ENCODE measurements at regions of chr10 and their contacts with region 1.

Region 1: DNA sequence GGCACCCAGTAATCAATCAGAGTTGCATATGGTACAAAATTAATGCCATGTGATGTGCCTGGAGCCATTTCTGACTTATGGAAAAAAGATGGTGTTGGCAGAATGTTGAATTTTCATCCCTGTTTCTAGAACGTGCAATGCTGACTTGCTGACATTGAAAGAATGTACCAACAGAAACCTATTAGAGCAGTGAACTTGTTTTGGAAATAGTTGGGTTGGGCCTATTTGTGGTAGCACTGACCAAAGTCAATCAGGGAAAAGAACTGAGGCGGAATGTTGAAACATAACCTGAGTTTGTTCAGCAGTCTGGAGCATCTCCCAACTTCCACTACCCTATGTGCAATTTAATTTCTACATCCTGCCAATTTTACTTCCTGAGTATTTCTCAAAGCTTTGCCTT is 11.7 kb upstream of the KIAA1217 start:
- DNase-seq: no peak
- H3K4me3 ChIP-seq: no peak overlapping the region
- H3K27ac ChIP-seq: no peak overlapping the region
- H3K4me1 ChIP-seq: peaks cover 0 to 10% (median 4%) of the 10 kb centered on the region in 4 donors
- H3K27me3 ChIP-seq: no peaks in the 10 kb centered on the region
- CTCF ChIP-seq: no peak
- EP300 ChIP-seq: no peak
- POLR2A ChIP-seq: no peak

Region 2: DNA sequence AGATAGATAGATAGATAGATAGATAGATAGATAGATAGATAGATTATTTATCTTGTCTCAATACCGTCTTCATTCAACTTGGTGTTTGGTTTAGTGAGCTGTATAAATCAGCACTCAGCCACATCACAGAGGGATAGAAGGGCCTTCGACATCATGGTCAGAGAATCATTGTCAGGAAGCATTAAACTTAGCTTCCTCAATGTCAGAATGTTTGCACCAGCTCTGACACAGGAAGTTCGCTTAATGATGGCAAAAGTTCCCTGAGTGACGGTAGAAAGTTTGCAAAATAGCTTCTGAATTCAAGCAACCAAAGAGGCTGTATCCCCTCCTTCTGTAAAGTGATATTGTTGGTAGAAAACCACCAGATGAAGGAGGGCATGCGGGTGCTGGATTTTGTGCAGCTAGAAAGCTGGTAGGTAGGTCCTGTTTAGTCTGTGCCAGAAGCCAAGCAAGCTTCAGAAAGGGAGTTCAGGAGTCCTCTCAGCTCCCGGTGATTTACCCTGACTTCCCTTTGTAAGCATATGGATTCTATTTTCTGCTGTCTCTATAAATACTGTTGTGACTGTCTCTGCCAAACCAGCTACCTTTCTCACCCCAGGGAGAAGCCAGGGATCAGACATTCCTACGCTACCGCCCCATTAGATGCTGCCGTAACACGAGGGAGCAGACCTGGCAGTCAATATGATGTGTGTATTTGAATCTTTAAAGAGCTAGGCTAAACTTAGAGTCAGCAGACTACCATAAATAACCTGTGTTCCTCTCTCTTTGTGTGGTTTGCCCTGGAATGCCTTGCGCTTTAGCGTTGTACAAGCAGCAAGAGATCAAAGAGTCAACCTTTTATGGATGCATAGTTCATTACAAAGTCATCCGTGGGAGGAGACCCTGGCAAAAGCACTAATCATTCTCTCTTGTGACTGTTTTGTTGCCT is 188.8 kb before region 1 on chr10:
- in situ Hi-C with region 1: loop called in 1 of 4 experiments (anchors 10 kb)
- intact Hi-C with region 1: no loop called
- DNase-seq: no peak
- H3K4me3 ChIP-seq: no peak overlapping the region
- H3K27ac ChIP-seq: no peak overlapping the region
- H3K4me1 ChIP-seq: no peaks in the 10 kb centered on the region
- H3K27me3 ChIP-seq: no peaks in the 10 kb centered on the region
- CTCF ChIP-seq: no peak
- EP300 ChIP-seq: no peak
- POLR2A ChIP-seq: no peak

Region 3: GRCh38 chr10:24331457-24331856 is 134.2 kb after region 1 on chr10:
- in situ Hi-C with region 1: no loop called
- intact Hi-C with region 1: no loop called
- DNase-seq: peak; percentile 72
- H3K4me3 ChIP-seq: no peak overlapping the region
- H3K27ac ChIP-seq: peak overlapping the region in 3 of 4 donors; percentile 1 to 46 (median 25)
- H3K4me1 ChIP-seq: peaks cover 0 to 9% (median 0%) of the 10 kb centered on the region in 4 donors
- H3K27me3 ChIP-seq: no peaks in the 10 kb centered on the region
- CTCF ChIP-seq: no peak
- EP300 ChIP-seq: no peak
- POLR2A ChIP-seq: no peak

Region 4: GRCh38 chr10:24518981-24519597 is 321.8 kb after region 1 on chr10:
- in situ Hi-C with region 1: loop called in 2 of 4 experiments (anchors 10 to 25 kb)
- intact Hi-C with region 1: no loop called
- DNase-seq: peak; percentile 56
- H3K4me3 ChIP-seq: no peak overlapping the region
- H3K27ac ChIP-seq: no peak overlapping the region
- H3K4me1 ChIP-seq: no peaks in the 10 kb centered on the region
- H3K27me3 ChIP-seq: no peaks in the 10 kb centered on the region
- CTCF ChIP-seq: peak; percentile 59 to 76 (median 74)
- EP300 ChIP-seq: no peak
- POLR2A ChIP-seq: no peak

Measured in transverse colon (tissue), 4 donors.